Left cardiac atrium (tissue), 4 donors: ENCODE measurements at regions of chr7 and their contacts with region 1.

Region 1: DNA sequence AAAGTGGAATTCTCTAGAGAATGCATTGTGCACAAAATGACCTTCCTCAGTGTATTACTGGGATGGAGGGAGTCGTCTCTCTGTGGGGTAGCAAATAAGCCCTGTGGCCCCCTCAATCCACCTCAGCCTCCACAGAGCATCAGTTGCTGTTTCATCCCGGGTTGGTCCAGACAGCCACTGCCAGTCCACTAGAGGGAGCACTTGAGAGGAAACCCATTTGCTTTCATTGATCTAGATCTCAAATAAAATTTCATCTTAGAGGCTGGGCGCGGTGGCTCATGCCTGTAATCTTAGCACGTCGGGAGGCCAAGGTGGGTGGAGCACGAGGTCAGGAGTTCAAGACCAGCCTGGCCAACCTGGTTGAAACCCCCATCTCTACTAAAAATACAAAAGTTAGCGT is 1128.7 kb downstream of the CNTNAP2 start:
- DNase-seq: peak; percentile 28
- ATAC-seq: peak in 1 of 2 donors; percentile 16

Region 2: DNA sequence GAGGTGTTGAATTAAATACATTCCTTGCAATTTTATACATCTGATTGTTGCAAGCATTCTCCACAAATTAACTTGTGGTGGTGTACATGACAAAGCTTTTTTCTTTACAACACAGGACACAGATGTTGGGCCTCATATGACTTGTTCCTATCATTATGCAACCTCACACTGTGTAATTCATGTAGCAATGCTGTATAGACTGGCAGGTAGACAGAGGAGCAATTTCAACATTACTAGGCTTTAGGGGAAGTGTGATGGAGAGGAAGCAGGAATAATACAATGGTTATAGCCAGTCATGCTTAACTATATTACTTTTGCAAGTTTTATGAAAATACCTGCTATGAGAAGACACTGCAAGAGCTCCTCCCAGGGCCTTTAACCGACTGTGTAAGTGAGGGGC is 296.6 kb before region 1 on chr7:
- intact Hi-C with region 1: no loop called
- DNase-seq: no peak
- ATAC-seq: no peak

Region 3: GRCh38 chr7:147298611-147299043 is 53.3 kb after region 1 on chr7:
- intact Hi-C with region 1: no loop called
- DNase-seq: no peak
- ATAC-seq: no peak

Region 4: DNA sequence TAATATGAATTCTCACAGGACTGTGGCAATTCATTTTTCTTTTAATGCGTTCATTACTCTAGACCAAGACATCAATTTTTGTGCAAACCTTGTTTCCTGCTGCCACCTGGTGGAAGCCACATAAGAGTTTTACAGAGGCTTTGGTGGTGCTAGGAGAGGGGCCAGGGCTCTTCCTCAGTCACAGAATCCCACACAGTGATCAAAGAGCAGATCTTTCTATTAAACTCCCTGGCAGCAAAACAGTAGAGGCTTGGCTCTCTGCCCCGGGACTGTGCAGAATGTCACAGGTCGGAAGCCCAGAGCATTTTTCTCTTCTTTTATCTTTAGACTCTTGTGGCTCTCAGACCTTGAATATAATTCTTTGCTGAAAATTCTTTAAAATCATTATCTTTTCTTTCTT is 838.8 kb after region 1 on chr7:
- intact Hi-C with region 1: loop called in 1 of 2 experiments (anchors 10 kb)
- DNase-seq: peak; percentile 34
- ATAC-seq: peak; percentile 59 to 68

Region 5: GRCh38 chr7:148262721-148263229 is 1017.5 kb after region 1 on chr7:
- intact Hi-C with region 1: loop called in 1 of 2 experiments (anchors 5 kb)
- DNase-seq: peak; percentile 59
- ATAC-seq: peak; percentile 86 to 89